ENCODE measurements at regions of chr13 and their contacts with region 1.

Region 1: GRCh38 chr13:42494157-42494556 is 79.8 kb upstream of the TNFSF11 start:
- DNase-seq: no peak
- ATAC-seq: no peak
- H3K4me3 ChIP-seq: no peak overlapping the region
- H3K27ac ChIP-seq: no peak overlapping the region
- H3K4me1 ChIP-seq: no peaks in the 10 kb centered on the region
- H3K27me3 ChIP-seq: no peaks in the 10 kb centered on the region
- CTCF ChIP-seq: no peak
- POLR2A ChIP-seq: no peak
- RAD21 ChIP-seq: no peak

Region 2: DNA sequence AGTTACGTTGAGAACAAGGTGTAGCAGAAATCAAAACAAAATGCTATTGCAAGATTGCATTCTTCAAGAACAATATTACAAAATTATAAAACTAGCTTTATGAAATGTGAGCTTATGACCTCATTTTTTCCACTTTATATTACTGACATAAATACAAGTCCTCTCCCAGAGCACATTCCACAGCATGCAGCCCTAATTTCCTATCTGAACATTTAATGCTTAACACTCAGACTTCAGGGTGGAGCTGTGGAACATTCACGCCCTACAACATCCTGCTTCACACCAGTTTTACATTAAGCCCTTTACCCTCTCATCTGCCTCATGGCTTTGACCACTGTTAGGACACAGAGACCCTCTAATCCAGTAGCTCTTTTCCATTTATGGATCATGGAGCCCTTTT is 432.4 kb after region 1 on chr13:
- CTCF ChIA-PET with region 1: no interaction called
- POLR2A ChIA-PET with region 1: no interaction called
- RAD21 ChIA-PET with region 1: no interaction called
- intact Hi-C with region 1: loop called (anchors 5 kb)
- DNase-seq: no peak
- ATAC-seq: no peak
- H3K4me3 ChIP-seq: no peak overlapping the region
- H3K27ac ChIP-seq: no peak overlapping the region
- H3K4me1 ChIP-seq: no peaks in the 10 kb centered on the region
- H3K27me3 ChIP-seq: 0 out of 2 replicates have a peak, but pooled peaks cover 4% of the 10 kb centered on the region
- CTCF ChIP-seq: no peak
- POLR2A ChIP-seq: no peak
- RAD21 ChIP-seq: no peak